ENCODE measurements at regions of chr19 and their contacts with region 1.

Region 1: DNA sequence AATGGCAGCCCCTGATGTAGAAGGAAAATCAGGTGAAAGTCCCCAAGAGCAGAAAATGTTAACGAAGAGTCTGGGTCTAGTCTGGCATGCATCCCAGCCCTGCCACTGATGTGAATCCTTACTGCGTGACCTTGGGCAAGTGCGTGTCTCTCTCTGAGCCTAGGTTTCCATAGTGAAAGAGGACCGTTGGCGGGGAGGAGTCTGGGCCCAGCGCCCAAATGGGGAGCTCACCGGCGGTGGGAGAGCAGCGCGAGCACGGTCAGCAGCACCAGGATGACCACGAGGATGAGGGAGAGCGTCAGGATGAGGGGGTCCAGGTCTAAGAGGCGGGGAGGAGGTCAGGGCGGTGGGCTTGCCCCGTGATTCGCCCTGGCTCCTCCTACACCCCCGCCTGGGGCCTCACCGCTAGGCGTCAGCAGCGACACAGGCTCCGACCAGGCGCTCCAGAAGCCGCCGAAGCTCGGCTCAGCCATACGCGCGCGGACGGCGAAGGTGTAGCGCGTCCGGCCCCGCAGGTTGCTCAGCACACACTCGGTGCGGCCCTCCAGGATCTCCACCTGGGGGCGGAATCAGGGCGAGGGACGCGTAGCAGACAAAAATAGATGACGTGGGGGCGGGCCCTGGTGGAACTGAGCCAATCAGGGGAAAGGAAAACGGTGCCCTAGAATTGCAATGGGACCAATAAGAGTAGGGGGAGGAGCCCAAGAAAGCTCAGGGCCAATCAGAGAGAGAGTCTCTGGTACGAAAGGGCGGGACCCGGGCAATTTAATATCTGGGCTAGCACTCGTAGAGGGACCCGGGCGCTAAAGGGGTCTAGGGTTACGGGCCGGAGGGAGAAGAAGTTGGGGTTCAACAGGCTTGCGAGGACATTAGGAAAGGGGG is 3.2 kb downstream of the EPOR start:
- DNase-seq: peak; percentile 99
- ATAC-seq: peak; percentile 83
- H3K4me3 Mint-ChIP-seq: peak overlapping the region; percentile 81
- H3K27ac Mint-ChIP-seq: peak overlapping the region; percentile 97
- H3K4me1 Mint-ChIP-seq: peaks cover 39% of the 10 kb centered on the region
- H3K27me3 Mint-ChIP-seq: peaks cover 19% of the 10 kb centered on the region

Region 2: DNA sequence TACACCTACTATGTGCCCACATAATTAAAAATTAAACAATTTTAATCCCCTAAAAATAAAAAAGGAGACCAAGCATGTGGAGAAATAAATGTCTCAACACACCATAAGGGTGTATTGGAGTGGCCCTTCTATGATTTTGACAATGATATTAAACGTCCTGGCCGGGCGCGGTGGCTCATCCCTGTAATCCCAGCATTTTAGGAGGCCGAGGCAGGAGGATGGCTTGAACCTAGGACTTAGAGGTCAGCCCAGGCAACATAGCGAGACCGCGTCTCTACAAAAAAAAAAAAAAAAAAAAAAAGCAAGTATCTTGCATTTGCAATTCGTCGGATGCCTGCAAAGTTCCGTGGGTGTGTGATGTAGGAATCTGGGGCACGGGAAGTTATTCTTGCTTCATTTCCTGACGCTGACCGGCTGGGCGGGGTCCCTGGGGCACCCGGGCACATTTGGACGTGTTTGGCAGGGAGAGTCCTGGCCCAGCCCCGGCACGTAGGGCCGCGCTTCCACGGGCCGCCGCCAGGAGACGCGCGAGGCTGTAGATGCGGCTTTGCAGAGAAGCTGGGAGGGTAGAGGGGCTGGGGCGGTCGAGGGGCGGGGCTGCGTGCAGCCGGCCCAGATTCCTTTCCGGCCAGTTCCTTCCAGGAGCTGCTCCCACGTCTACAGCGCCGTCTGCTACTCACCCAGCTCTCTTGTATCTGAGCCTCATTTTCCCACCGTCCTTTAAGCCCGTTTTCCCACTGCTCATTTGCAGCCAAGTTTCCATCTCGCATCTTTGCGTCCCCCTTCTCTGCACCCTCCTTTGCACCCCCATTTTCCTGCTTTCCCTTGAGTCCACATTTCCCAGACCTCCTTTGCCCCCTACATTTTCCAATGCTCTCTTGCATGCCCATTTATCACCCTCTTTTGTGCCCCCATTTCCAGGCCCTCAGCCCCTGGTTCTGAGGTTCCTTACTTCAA is 87.2 kb before region 1 on chr19:
- CTCF ChIA-PET with region 1: interaction called, 15 read pairs
- DNase-seq: peak; percentile 82
- ATAC-seq: peak; percentile 97
- H3K4me3 Mint-ChIP-seq: peak overlapping the region; percentile 43
- H3K27ac Mint-ChIP-seq: no peak overlapping the region
- H3K4me1 Mint-ChIP-seq: peaks cover 5% of the 10 kb centered on the region
- H3K27me3 Mint-ChIP-seq: peaks cover 57% of the 10 kb centered on the region

Region 3: DNA sequence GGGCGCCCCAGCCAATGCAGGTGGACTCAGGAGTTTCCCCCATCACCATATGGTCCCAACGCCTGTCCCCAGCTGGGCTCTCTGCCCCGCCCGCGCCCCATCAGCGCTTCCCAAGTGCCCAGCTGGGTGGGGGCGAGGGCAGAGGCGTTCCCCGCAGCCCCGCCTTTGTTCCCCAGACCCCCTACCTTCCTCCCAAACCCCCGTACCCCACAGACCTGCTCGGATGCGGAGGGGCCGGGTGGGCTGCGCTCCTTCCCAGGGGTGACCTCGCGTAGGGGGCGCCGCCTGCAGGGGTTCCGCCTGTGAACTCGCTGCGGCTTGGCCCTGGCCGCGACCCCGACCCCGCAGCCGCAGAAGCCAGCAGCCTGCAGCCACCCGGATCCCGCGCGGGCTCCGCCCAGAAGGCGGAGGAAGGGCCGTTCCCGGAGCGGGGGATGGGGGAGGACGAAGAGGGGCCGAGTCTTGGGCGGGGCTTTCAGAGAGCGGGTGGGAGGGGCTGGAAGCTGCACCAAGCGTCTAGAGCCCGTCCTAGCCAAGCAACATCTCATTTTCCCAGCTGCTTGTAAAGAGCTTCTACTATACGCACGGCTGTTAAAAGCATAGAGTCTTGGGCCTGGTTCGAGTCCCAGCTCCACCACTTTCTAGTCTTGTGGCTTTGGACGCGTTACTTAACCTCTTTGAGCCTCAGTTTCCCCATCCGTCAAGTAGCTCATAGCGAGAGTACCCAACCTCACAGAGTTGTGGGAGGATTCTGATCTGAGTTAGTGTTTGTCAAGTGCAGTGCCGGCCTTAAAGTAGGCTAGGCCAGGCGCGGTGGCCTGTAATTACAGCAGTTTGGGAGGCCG is 41.4 kb before region 1 on chr19 and contains the start of gene RAB3D:
- CTCF ChIA-PET with region 1: interaction called, 11 read pairs
- DNase-seq: peak; percentile 89
- ATAC-seq: peak; percentile 95
- H3K4me3 Mint-ChIP-seq: peak within 1 kb of the TSS; percentile 72
- H3K27ac Mint-ChIP-seq: no peak within 1 kb of the TSS
- H3K4me1 Mint-ChIP-seq: peaks cover 24% of the 10 kb centered on the region
- H3K27me3 Mint-ChIP-seq: no peaks in the 10 kb centered on the region
- total RNA-seq, gene RAB3D: 3.6 to 5.1 TPM

Region 4: GRCh38 chr19:11356676-11357550 is 24.0 kb before region 1 on chr19:
- CTCF ChIA-PET with region 1: no interaction called
- DNase-seq: no peak
- ATAC-seq: no peak
- H3K4me3 Mint-ChIP-seq: no peak overlapping the region
- H3K27ac Mint-ChIP-seq: no peak overlapping the region
- H3K4me1 Mint-ChIP-seq: peaks cover 11% of the 10 kb centered on the region
- H3K27me3 Mint-ChIP-seq: peaks cover 9% of the 10 kb centered on the region

Region 5: DNA sequence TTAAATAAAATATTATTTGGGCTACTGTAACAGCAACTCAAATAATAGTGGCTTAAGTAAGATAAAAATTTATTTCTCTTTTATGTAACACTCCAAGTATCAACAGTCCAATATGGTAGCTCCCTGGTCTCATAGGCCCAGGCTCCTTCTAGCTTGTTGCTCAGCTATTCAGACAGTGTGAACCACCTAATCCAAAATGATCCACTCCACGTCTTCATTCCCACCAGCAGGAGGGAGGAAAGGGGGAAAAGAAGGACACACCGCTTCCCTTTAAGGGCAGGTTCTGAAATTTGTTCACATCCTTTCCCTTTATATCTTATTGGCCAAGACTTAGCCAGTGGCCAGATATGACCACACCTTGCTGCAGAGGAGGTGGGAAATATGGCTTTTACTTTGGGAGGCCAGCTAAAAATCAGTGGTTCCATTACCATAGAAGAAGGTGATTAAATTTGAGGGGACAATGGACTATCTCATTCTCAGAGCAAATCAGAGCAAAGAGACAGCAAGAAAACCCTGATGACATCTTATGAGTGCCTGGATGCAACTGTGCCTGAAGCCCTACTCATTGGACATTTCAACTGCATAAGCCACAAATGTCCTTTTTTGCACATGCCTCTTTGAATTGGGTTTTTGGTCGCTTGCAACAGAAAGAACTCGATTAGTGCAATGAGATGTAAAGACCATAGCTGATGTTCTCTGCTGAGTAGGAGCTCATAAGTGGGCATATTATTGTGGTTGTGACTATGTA is 10.2 kb after region 1 on chr19:
- CTCF ChIA-PET with region 1: interaction called, 18 read pairs
- DNase-seq: no peak
- ATAC-seq: no peak
- H3K4me3 Mint-ChIP-seq: no peak overlapping the region
- H3K27ac Mint-ChIP-seq: no peak overlapping the region
- H3K4me1 Mint-ChIP-seq: peaks cover 6% of the 10 kb centered on the region
- H3K27me3 Mint-ChIP-seq: no peaks in the 10 kb centered on the region

Region 6: DNA sequence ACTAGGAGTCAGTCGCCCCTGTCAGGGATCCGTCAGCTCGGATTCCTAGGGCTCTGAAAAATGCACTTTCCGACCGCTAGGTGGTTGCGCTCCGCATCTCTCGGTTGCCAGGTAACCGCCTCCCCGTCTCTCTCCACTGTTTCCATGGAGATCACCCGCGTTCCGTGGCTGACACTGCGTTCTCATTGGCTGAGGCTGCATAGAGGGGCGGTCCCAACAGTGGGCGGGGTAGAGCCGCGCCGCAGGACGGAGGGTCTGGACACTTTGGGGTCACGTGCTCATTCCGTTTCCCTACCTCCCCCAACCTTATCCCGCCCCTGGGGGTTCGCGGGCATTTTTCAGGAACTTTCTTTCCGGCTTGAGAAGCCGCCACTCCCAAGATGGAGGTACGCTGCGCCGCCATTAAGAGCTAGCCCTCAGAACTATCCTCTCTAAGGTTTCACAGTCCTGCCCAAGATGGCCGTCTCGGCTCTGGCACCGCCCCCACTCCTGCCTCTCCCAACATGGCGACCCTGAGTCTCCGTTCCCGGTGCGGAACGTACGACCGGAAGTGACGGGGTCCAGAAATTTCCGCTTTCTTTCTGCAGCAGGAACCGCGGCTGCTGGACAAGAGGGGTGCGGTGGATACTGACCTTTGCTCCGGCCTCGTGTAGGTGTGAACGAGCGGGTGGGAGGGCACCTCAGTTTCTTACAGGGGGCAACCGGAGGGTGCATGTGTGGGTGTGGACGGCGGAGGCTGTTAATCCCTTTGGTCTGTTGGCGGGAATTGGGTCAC is 54.4 kb after region 1 on chr19 and contains the starts of genes ODAD3 and PRKCSH:
- CTCF ChIA-PET with region 1: interaction called, 29 read pairs
- DNase-seq: peak; percentile 99
- ATAC-seq: peak; percentile 95
- H3K4me3 Mint-ChIP-seq: peak within 1 kb of the TSS; percentile 100
- H3K27ac Mint-ChIP-seq: peak within 1 kb of the TSS; percentile 96
- H3K4me1 Mint-ChIP-seq: peaks cover 25% of the 10 kb centered on the region
- H3K27me3 Mint-ChIP-seq: peaks cover 4% of the 10 kb centered on the region
- total RNA-seq, gene ODAD3: 0.15 to 0.54 TPM
- total RNA-seq, gene PRKCSH: 278 to 306 TPM

Region 7: DNA sequence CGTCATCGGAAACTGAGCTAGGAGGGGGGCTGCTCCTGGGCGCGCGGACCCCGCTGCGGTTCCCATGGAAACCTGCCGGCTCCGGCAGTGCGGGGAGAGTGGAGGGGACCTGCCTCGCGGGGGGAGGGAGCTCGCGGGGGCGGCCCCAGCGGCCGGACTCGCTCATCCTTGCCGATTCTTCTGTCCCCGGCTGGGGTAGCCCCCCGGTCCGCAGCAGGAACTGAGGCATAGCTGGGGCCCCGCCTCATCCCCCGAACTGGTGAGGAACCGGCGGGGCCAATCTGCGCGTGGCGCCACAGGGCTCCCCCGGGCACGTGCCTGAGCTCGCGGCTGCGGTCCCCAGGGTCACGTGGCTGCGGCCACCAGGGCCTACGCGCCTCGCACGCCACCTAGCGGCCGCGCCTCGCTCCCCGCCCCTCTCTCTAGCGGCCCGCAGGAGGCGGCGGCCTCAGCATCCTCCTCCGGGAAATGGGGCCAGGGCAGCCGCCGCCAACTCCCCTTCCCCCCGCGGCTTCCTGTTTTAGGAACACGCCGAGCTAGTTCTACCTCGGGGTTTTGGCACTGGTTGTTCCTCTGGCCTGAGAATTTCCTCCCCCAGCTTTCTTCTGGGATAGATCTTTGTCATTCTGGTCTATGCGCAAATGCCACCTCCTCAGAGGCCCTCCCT is 101.6 kb after region 1 on chr19:
- CTCF ChIA-PET with region 1: interaction called, 52 read pairs
- DNase-seq: peak; percentile 91
- ATAC-seq: peak; percentile 79
- H3K4me3 Mint-ChIP-seq: peak overlapping the region; percentile 60
- H3K27ac Mint-ChIP-seq: peak overlapping the region; percentile 77
- H3K4me1 Mint-ChIP-seq: peaks cover 20% of the 10 kb centered on the region
- H3K27me3 Mint-ChIP-seq: peaks cover 25% of the 10 kb centered on the region

Measured in activated CD8-positive, alpha-beta memory T cell treated with anti-CD3 and anti-CD28 coated beads, Interleukin-2, amount 10 ng/mL, durations not matched to agents 7 days and 5 days (primary cell).